ENCODE measurements at regions of chr12 and their contacts with region 1.

Region 1: GRCh38 chr12:9079883-9080675 is 35.6 kb downstream of the A2M start:
- DNase-seq: no peak
- ATAC-seq: no peak
- H3K4me3 Mint-ChIP-seq: no peak overlapping the region
- H3K27ac Mint-ChIP-seq: no peak overlapping the region
- H3K4me1 Mint-ChIP-seq: no peaks in the 10 kb centered on the region
- H3K27me3 Mint-ChIP-seq: peaks cover 8% of the 10 kb centered on the region

Region 2: DNA sequence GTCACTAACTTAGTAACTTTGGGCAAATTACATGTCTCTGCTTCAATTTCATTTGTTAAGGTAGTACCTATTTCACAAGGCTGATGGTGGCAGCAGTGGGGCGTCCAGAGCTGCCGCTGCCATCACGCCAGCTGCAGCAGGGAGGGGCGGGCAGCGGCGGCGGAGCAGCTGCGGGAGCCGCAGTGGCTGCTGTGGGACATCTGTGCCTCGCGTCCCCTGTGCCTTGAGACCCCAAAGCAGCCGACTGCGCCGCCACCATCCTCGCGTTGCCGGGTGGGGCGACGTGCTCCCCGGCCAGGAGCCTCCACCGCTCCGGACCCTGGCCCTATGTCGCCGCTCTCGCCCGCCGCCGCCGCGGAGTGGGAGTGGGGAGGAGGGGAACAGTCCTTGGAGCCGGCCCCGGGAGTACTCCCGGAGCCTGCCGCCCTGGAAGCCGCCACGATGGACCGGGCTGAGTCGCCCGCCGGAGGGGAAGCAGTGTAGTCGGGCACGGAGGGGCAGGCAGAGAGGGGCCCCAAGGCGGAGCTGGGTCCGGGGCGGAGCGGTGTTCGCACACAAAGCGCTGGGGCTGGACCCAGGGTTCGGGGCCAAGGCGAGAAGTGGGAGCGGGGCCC is 15.8 kb before region 1 on chr12:
- CTCF ChIA-PET with region 1: interaction called, 14 read pairs
- POLR2A ChIA-PET with region 1: no interaction called
- DNase-seq: peak; percentile 71
- ATAC-seq: peak; percentile 93
- H3K4me3 Mint-ChIP-seq: peak overlapping the region; percentile 71
- H3K27ac Mint-ChIP-seq: no peak overlapping the region
- H3K4me1 Mint-ChIP-seq: peaks cover 3% of the 10 kb centered on the region
- H3K27me3 Mint-ChIP-seq: peaks cover 27% of the 10 kb centered on the region

Measured in activated CD8-positive, alpha-beta T cell treated with anti-CD3 and anti-CD28 coated beads, Interleukin-2, amount 10 ng/mL, durations not matched to agents 7 days and 5 days (primary cell).